K562 (cell line): ENCODE measurements at regions of chr6 and their contacts with region 1.

Region 1: DNA sequence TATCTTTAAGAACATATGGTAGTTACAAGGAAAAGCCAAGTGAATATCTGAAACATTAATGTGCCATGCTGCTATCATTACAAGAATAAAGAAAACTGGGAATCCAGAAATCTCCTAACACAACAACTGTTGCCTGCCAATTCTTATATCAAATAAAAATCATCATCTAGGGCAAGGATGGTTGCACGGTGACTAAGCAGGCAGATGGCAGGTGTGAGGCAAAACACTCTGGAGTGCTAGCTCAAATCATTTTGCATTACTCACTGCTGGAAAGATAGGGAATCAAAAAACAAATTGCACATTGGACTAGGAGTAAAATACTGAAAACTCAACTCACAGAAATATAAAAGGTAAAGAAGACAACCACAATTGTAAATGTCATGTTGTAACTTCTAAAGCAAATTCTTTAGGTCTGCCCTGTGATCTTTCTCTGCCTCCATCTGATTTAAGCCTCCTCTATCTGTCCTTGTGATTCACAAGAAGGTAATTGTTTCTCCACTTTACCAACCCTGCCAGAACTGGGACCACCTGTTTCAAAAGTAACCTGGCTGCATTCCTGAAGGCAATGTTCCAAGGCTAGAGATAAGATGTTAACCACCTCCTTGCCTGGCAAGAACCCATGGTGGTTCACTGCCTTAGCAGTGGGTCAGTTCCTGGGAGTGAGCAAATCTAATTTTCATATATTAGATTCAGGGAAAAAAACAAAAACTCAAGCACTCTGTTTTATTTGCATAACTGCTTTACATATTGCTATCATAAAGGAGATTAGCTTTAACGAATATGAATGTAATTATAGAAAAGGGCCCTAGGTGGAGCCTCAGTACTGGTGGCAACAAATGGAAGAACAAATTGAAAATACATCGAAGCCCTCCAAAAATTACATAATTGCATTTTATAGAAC is 33.1 kb upstream of the LCA5 start:
- DNase-seq: peak; percentile 38 to 62 (median 42)
- ATAC-seq: peak; percentile 87
- H3K4me3 ChIP-seq: no peak overlapping the region
- H3K27ac ChIP-seq: no peak overlapping the region
- H3K4me1 ChIP-seq: no peaks in the 10 kb centered on the region
- H3K27me3 ChIP-seq: no peaks in the 10 kb centered on the region
- CTCF ChIP-seq: peak; percentile 60 to 89 (median 60)
- EP300 ChIP-seq: no peak
- POLR2A ChIP-seq: no peak
- RAD21 ChIP-seq: peak; percentile 88 to 93

Region 2: DNA sequence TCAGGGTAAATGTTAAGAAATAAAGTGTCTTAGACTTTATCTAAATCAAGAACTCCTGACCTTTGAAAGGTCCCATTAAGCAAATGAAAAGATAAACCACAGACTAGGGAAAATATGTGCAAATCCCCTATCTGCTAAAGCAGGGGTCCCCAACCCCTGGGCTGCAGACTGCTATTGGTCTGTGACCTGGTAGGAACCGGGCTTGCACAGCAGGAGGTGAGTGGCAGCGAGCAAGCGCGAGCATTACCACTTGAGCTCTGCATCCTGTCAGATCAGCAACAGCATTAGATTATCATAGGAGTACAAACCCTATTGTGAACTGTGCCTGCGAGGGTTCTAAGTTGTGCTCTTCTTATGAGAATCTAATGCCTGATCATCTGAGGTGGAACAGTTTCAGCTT is 75.5 kb before region 1 on chr6:
- CTCF ChIA-PET with region 1: no interaction called
- POLR2A ChIA-PET with region 1: no interaction called
- in situ Hi-C with region 1: no loop called
- intact Hi-C with region 1: no loop called
- DNase-seq: peak in 1 of 4 experiments; percentile 37
- ATAC-seq: peak; percentile 79
- H3K4me3 ChIP-seq: no peak overlapping the region
- H3K27ac ChIP-seq: no peak overlapping the region
- H3K4me1 ChIP-seq: peaks cover 0 to 3% of the 10 kb centered on the region in 2 experiments; a peak in 1 of 5 replicates
- H3K27me3 ChIP-seq: no peaks in the 10 kb centered on the region
- CTCF ChIP-seq: no peak
- EP300 ChIP-seq: no peak
- POLR2A ChIP-seq: no peak
- RAD21 ChIP-seq: no peak

Region 3: DNA sequence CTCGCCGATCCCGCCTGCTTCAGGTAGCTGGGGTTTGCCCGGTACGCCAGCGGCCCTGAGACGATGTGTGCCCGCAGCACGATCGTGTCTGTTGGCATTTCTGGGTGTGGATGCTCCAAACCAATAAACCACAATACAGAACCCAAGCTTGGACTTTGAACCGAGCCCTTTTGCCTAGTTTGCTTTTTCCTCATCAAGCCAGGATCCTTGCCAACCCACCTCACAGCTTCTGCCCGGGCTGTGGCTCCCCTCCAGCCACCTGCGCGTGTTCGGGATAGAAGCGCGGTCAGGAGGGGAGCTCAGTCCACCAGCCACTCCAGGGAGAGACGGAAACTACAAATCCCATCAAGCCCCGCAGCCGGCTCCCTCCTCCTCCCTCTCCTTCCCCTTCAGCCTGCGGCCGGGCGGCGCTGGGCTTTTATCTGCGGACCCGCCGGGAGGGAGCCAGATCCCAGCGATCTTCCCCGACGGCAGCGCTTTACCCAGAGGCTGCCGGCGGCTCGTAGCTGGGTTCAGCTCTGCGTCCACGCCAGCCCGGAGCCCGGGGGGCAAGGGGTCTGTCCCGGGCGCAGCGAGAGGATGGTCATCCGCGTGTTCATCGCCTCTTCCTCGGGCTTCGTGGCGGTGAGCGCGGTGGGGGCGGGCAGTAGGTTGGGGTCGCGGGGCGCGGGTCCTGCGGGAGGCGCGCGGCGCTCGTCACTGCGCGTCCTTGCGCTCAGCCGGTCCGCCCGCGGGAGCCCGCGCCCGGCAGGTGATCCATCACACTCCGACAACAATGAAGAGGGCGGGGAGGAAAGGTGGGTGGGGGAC is 60.7 kb after region 1 on chr6 and contains the start of gene SH3BGRL2:
- CTCF ChIA-PET with region 1: no interaction called
- POLR2A ChIA-PET with region 1: interaction called, 6 read pairs
- in situ Hi-C with region 1: no loop called
- intact Hi-C with region 1: loop called (anchors 2 kb)
- DNase-seq: peak; percentile 64 to 89 (median 78)
- ATAC-seq: peak; percentile 97
- H3K4me3 ChIP-seq: peak within 1 kb of the TSS; percentile 74
- H3K27ac ChIP-seq: peak within 1 kb of the TSS; percentile 56
- H3K4me1 ChIP-seq: peaks cover 14 to 19% of the 10 kb centered on the region in 2 experiments; a peak in 4 of 5 replicates
- H3K27me3 ChIP-seq: no peaks in the 10 kb centered on the region
- CTCF ChIP-seq: no peak
- EP300 ChIP-seq: no peak
- POLR2A ChIP-seq: peak; percentile 78
- RAD21 ChIP-seq: no peak
- polyA plus RNA-seq, gene SH3BGRL2: 4.4 to 5.0 TPM

Region 4: GRCh38 chr6:79672631-79673111 is 102.3 kb after region 1 on chr6:
- CTCF ChIA-PET with region 1: interaction called, 6 read pairs
- POLR2A ChIA-PET with region 1: no interaction called
- in situ Hi-C with region 1: no loop called
- intact Hi-C with region 1: loop called (anchors 1 kb)
- DNase-seq: peak in 3 of 4 experiments; percentile 16 to 56 (median 18)
- ATAC-seq: peak; percentile 73
- H3K4me3 ChIP-seq: no peak overlapping the region
- H3K27ac ChIP-seq: no peak overlapping the region
- H3K4me1 ChIP-seq: peaks cover 5 to 10% of the 10 kb centered on the region in 2 experiments; a peak in 3 of 5 replicates
- H3K27me3 ChIP-seq: no peaks in the 10 kb centered on the region
- CTCF ChIP-seq: peak; percentile 32 to 71 (median 60); a peak in 5 of 6 replicates
- EP300 ChIP-seq: no peak
- POLR2A ChIP-seq: no peak
- RAD21 ChIP-seq: peak; percentile 64 to 88

Region 5: GRCh38 chr6:79713701-79714322 is 143.4 kb after region 1 on chr6:
- CTCF ChIA-PET with region 1: no interaction called
- POLR2A ChIA-PET with region 1: no interaction called
- in situ Hi-C with region 1: no loop called
- intact Hi-C with region 1: loop called (anchors 1 kb)
- DNase-seq: peak; percentile 50 to 75 (median 50)
- ATAC-seq: peak; percentile 93
- H3K4me3 ChIP-seq: no peak overlapping the region
- H3K27ac ChIP-seq: no peak overlapping the region
- H3K4me1 ChIP-seq: no peaks in the 10 kb centered on the region
- H3K27me3 ChIP-seq: 0 out of 5 replicates have a peak, but pooled peaks cover 0 to 8% of the 10 kb centered on the region in 2 experiments
- CTCF ChIP-seq: peak; percentile 64 to 78 (median 73)
- EP300 ChIP-seq: no peak
- POLR2A ChIP-seq: no peak
- RAD21 ChIP-seq: peak; percentile 73 to 79